Activated CD8-positive, alpha-beta T cell treated with anti-CD3 and anti-CD28 coated beads for 36 hours (primary cell): ENCODE measurements at regions of chr3 and their contacts with region 1.

Region 1: GRCh38 chr3:192917404-192918274 is at the start of gene MB21D2:
- DNase-seq: peak; percentile 62
- ATAC-seq: peak; percentile 70
- H3K4me3 Mint-ChIP-seq: peak within 1 kb of the TSS; percentile 82
- H3K27ac Mint-ChIP-seq: peak within 1 kb of the TSS; percentile 83
- H3K4me1 Mint-ChIP-seq: peaks cover 19% of the 10 kb centered on the region
- H3K27me3 Mint-ChIP-seq: peaks cover 60% of the 10 kb centered on the region
- CTCF ChIP-seq: no peak
- total RNA-seq, gene MB21D2: 3.1 to 3.2 TPM

Region 2: DNA sequence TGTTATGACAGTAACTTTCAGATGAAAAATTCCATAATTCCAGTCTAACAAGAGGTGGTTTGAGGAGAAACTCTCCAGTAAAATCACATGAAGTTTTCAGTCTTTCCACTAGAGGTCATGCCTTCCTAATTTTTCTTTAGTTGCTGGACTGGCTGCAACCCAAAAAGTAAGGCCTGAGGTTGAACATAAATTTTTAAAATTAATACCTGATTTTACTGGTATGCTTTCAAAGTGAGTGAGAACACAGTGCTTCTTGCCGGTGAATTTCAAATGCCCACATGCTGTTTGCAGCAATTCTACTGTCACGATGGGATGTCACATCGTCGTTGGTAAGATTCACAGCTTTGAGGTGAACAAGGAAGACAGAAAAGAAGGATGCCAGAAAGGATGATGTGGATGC is 101.3 kb before region 1 on chr3:
- CTCF ChIA-PET with region 1: interaction called, 13 read pairs
- POLR2A ChIA-PET with region 1: no interaction called
- intact Hi-C with region 1: loop called (anchors 5 kb)
- DNase-seq: no peak
- ATAC-seq: no peak
- H3K4me3 Mint-ChIP-seq: no peak overlapping the region
- H3K27ac Mint-ChIP-seq: no peak overlapping the region
- H3K4me1 Mint-ChIP-seq: peaks cover 22% of the 10 kb centered on the region
- H3K27me3 Mint-ChIP-seq: no peaks in the 10 kb centered on the region
- CTCF ChIP-seq: peak; percentile 69